ENCODE measurements at regions of chr4 and their contacts with region 1.

Region 1: GRCh38 chr4:82900331-82901128 is at the start of gene THAP9:
- DNase-seq: peak; percentile 94 to 99 (median 96)
- ATAC-seq: peak; percentile 92
- H3K4me3 ChIP-seq: peak within 1 kb of the TSS; percentile 75
- H3K27ac ChIP-seq: peak within 1 kb of the TSS; percentile 100
- H3K4me1 ChIP-seq: peaks cover 5 to 11% of the 10 kb centered on the region in 2 experiments; a peak in 4 of 5 replicates
- H3K27me3 ChIP-seq: no peaks in the 10 kb centered on the region
- CTCF ChIP-seq: 0 out of 6 replicates have a peak, but pooled peaks of 1 of the 3 experiments have one; percentile 6
- EP300 ChIP-seq: peak; percentile 40; the same call in 1 of the 2 replicates
- POLR2A ChIP-seq: peak; percentile 94
- RAD21 ChIP-seq: no peak
- polyA plus RNA-seq, gene THAP9: 4.8 to 5.6 TPM

Region 2: DNA sequence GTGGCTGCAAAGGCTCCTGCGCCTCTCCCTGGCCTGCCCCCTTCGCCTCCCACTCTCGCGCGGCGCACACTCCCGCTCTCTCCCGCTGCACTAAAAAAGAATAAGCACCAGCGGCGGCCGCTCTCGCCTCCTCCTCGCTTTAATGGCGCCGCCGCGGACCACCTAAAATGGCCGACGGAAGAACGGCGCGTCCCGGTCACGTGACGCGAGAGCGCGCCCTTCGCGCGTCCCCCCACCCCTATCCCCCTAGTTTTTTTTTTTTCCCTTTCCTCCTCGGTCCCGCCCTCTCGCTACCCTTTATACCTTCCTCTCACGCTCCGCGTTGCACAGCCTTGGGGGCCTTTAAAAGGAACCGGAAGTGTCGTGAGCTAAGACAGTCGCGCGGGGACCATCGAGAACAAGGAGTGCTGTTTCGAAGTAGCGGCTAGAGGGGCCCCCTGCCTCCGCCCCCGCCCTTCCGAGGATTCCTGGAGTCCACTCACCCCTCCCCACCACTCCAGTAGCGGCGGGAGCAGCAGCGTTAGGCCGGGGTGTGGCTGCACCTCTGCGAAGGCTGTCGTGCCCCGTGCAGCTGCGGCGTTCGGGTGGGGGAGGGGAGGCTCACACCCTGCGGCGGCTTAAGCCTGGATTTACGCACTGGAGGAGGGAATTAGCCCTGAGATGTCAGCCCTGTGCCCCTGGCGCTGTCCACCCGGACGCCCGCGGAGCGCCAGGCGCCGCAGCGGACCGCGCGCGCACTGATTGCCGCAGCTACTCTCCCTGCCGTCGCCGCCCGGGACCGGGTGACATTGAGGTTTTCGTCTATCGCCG is 526.5 kb before region 1 on chr4 and contains the start of gene HNRNPD:
- CTCF ChIA-PET with region 1: no interaction called
- POLR2A ChIA-PET with region 1: no interaction called
- in situ Hi-C with region 1: no loop called
- intact Hi-C with region 1: loop called (anchors 5 kb)
- DNase-seq: peak; percentile 88 to 99 (median 92)
- ATAC-seq: peak; percentile 85
- H3K4me3 ChIP-seq: peak within 1 kb of the TSS; percentile 94
- H3K27ac ChIP-seq: peak within 1 kb of the TSS; percentile 100
- H3K4me1 ChIP-seq: peaks cover 8 to 9% of the 10 kb centered on the region in 2 experiments; a peak in 4 of 5 replicates
- H3K27me3 ChIP-seq: no peaks in the 10 kb centered on the region
- CTCF ChIP-seq: no peak
- EP300 ChIP-seq: no peak; the same call in 1 of the 2 replicates
- POLR2A ChIP-seq: peak; percentile 88
- RAD21 ChIP-seq: no peak; a peak in 1 of 4 replicates
- polyA plus RNA-seq, gene HNRNPD: 152 to 187 TPM

Region 3: DNA sequence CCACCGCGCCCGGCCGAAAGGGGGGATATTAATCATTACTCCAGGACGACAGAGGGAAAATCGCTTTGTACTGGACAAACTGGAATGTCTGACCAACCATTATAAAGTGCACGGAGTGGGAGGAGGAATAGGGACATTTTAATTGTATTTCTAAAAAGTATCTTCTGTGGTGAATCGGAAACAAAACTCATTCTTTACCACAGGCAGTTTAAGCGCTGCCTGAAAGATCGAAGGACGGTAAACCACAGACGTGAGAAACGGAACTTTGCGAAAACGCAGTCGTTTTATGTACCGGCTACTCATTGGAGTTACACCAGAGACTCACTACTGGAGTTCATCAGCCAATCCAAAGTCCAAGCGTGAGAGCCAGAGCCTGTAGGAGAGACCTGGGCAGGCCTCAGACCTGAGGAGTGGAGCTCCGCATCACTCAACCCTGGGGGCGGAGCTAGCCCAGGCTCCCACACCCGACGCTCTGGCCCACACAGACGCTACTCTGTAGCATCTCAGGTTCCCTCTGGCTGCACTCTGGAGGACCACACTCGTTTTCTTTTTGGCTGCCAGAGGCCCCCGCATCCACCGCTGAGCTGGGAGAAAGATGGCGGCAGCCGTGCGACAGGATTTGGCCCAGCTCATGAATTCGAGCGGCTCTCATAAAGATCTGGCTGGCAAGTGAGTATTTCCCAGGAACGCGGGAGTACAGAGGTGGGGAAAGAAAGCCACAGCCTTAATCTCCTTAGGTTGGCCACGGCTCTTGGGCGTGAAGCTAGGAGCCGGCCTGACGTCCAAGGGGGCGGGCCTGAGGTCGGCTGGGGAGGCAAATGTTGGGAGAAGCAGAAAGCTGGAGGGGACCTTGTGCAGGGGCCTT is 134.3 kb after region 1 on chr4 and contains the start of gene COPS4:
- CTCF ChIA-PET with region 1: no interaction called
- POLR2A ChIA-PET with region 1: interaction called, 4 read pairs
- in situ Hi-C with region 1: no loop called
- intact Hi-C with region 1: loop called (anchors 2 kb)
- DNase-seq: peak; percentile 95 to 99 (median 96)
- ATAC-seq: peak; percentile 97
- H3K4me3 ChIP-seq: peak within 1 kb of the TSS; percentile 56
- H3K27ac ChIP-seq: peak within 1 kb of the TSS; percentile 86
- H3K4me1 ChIP-seq: peaks cover 6 to 12% of the 10 kb centered on the region in 2 experiments; a peak in 4 of 5 replicates
- H3K27me3 ChIP-seq: no peaks in the 10 kb centered on the region
- CTCF ChIP-seq: no peak
- EP300 ChIP-seq: peak; percentile 55; the same call in 1 of the 2 replicates
- POLR2A ChIP-seq: peak; percentile 95
- RAD21 ChIP-seq: peak in 1 of 2 experiments; percentile 21; a peak in 1 of 4 replicates
- polyA plus RNA-seq, gene COPS4: 171 to 180 TPM

Region 4: GRCh38 chr4:83284193-83285054 is 383.9 kb after region 1 on chr4 and contains the start of gene COQ2:
- CTCF ChIA-PET with region 1: no interaction called
- POLR2A ChIA-PET with region 1: interaction called, 4 read pairs
- in situ Hi-C with region 1: no loop called
- intact Hi-C with region 1: loop called (anchors 5 kb)
- DNase-seq: peak; percentile 92 to 95 (median 94)
- ATAC-seq: peak; percentile 94
- H3K4me3 ChIP-seq: peak within 1 kb of the TSS; percentile 75
- H3K27ac ChIP-seq: peak within 1 kb of the TSS; percentile 88
- H3K4me1 ChIP-seq: peaks cover 5 to 15% of the 10 kb centered on the region in 2 experiments; a peak in 4 of 5 replicates
- H3K27me3 ChIP-seq: no peaks in the 10 kb centered on the region
- CTCF ChIP-seq: peak; percentile 23 to 45 (median 34); a peak in 4 of 6 replicates
- EP300 ChIP-seq: no peak
- POLR2A ChIP-seq: peak; percentile 85
- RAD21 ChIP-seq: peak; percentile 14 to 47; a peak in 2 of 4 replicates
- polyA plus RNA-seq, gene COQ2: 1.9 to 2.9 TPM